Mucosa of descending colon (tissue), 3 donors: ENCODE measurements at regions of chr1 and their contacts with region 1.

Region 1: DNA sequence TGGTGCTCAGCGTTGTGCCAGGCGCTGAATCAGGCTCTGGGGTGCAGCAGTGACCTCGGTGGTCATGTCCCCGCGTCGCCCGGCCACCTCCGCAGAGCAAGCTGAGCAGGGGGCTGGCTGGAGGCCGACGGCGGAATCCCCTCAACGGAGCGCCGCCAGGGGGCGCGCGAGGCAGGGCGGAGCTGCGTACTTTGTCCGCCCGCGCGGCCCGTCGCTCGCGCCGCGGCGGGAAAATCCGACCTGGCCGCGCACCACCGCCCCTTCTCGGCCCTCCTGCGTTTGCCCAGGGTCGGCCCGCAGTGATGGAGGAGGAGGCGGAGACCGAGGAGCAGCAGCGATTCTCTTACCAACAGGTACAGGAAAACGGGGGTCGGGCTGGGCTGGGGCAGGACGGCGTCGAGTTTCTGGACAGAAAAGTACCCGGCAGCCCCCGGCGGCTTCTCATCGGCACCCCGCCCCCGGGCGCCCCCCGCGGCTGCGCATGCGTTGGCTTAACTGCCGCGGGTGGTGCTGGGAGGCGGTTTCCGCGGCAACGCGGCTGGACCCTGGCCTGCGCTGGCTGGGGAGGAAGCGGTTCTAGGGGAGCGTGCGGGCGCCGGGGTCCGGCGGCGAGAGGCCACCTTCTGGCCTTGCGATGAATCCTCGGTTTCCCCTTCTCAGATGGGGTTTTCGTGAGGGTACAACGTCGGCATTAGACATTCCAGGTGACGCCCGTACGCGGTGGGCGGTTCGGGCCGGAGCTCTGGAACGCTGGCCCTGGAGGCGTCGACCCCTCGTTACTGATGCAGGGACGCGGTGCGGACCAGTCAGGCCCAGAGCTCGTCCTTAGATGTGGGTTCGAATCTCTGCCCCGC is at the start of gene CENPS:
- DNase-seq: peak; percentile 91 to 96 (median 92)
- ATAC-seq: peak; percentile 95
- H3K4me3 ChIP-seq: peak within 1 kb of the TSS; percentile 63
- H3K4me1 ChIP-seq: peaks cover 10% of the 10 kb centered on the region
- CTCF ChIP-seq: peak; percentile 96
- total RNA-seq, gene CENPS: 10.6 to 12.2 (median 11.1) TPM

Region 2: DNA sequence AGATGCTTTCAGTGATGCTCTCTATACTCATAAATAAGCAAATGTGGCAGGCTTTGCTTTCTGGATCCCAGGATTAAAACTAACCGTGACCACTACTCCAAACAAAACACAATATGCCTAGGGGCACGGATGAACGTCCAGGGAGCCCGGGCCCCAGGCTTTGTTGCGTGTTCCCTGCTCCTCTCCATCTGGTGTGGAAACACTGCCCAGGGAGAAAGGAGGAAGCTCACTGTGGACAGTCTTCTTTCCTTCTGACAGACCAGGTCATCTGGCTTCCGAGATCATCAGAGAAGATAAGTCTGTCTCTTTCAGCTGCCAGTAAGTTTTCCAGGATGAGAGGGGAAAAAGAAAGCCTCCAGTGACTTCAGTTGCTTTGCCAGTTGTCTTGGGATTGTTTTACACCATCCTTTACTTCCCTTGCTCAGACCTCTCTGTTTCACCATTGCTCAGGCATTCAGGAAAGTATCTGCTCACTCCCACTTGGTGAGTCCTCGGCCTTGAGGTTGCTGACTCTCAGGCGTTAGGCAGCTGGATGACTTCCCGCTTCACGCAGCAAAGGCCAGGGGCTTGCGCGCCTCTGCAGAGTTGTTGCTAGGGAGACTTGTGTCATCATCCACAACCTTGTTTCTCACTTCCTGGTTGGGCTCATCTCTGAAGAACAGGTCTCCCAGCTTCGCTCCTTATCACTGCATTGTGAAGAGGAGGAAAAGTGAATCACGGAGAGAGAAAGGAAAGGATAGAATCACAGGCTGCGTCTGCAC is 52.2 kb before region 1 on chr1:
- intact Hi-C with region 1: loop called (anchors 2 to 10 kb)
- DNase-seq: peak in 1 of 3 donors; percentile 66
- ATAC-seq: peak; percentile 45
- H3K4me3 ChIP-seq: no peak overlapping the region
- H3K4me1 ChIP-seq: no peaks in the 10 kb centered on the region
- CTCF ChIP-seq: no peak

Region 3: DNA sequence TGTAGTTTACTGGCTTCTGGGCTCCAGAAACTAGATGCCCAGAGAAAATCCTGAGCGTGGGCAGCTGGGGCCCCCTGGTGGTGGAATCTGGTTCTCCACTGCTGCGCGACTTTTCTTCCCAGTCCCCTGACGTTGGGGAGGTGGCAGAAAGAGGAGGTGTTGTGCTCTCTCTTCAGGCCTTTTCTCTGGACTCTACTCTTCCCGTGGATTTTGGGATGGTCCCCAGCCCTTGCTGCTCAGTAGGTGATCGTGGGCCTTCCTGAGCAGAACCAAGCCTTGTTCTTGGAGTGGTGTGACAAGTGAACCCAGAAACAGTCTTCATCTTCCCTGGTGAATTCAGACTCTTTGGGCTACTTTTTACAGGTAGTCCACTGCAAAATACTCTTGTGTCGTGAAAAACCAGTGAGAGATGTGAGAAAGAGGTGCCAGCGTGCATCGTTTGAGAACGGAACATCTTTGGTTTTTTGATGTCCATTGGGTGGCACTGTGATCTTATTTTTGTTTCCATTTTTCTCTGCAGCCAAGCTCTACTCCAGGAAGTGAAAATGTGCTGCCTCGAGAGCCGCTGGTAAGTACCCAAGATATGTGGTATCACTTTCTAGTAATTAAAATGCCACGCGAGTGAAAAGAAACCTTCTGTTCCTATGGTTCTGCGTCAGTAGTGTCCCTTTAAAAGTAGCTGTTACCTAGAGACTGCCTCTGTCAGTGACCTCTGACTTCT is 64.5 kb after region 1 on chr1:
- intact Hi-C with region 1: loop called in 1 of 2 experiments (anchors 10 kb)
- DNase-seq: peak; percentile 66 to 91 (median 89)
- ATAC-seq: peak; percentile 93
- H3K4me3 ChIP-seq: no peak overlapping the region
- H3K4me1 ChIP-seq: peaks cover 16% of the 10 kb centered on the region
- CTCF ChIP-seq: peak; percentile 88

Region 4: GRCh38 chr1:10824821-10825423 is 394.5 kb after region 1 on chr1:
- intact Hi-C with region 1: no loop called
- DNase-seq: no peak
- ATAC-seq: peak; percentile 32
- H3K4me3 ChIP-seq: no peak overlapping the region
- H3K4me1 ChIP-seq: no peaks in the 10 kb centered on the region
- CTCF ChIP-seq: no peak